Psoas muscle (tissue), 8 donors: ENCODE measurements at regions of chr9 and their contacts with region 1.

Region 1: GRCh38 chr9:137759649-137760321 is 117.8 kb upstream of the CACNA1B start:
- DNase-seq: no peak
- ATAC-seq: peak in 3 of 4 donors; percentile 9 to 14 (median 11)
- H3K4me3 ChIP-seq: no peak overlapping the region
- H3K27ac ChIP-seq: peak overlapping the region; percentile 77
- H3K4me1 ChIP-seq: peaks cover 6% of the 10 kb centered on the region
- H3K27me3 ChIP-seq: no peaks in the 10 kb centered on the region
- CTCF ChIP-seq: no peak

Region 2: DNA sequence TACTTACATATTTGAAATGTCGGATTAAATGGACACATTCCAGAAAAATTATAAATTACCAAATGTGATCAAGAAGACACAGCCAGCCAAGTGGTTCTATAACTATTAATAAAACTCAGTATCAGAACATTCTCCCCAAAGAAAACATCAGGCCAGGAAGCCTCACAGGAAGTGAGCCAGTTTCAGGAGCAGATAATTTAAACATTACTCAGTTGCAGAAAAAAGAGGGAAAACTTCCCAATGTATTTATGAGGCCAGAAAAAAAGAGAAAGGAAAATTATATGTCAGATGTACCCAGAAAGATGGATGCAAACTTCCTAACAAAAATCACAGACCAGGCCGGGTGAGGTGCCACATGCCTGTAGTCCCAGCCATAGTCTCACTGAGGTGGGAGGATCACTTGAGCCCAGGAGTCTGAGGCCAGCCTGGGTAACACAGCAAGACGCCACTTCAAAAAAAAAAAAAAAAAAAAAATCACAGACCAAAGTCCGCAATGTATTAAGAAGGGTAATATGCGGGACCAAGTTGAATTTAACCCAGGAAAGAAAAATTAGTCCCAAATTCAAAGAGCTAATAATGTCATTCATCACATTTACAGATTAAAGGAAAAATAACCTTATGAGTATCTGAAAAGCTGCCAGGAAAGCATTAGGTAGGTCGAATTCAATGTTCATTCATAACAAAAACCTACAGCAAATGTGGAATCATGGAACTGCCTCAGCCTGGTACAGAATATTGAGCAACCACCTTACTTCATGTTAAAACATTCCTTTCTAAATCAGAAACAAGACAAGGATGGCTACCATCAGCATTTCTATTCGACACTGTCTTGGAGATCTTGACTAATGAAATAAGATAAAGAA is 420.5 kb before region 1 on chr9:
- intact Hi-C with region 1: no loop called
- DNase-seq: no peak
- ATAC-seq: no peak
- H3K4me3 ChIP-seq: no peak overlapping the region
- H3K27ac ChIP-seq: no peak overlapping the region
- H3K4me1 ChIP-seq: no peaks in the 10 kb centered on the region
- H3K27me3 ChIP-seq: no peaks in the 10 kb centered on the region
- CTCF ChIP-seq: no peak

Region 3: DNA sequence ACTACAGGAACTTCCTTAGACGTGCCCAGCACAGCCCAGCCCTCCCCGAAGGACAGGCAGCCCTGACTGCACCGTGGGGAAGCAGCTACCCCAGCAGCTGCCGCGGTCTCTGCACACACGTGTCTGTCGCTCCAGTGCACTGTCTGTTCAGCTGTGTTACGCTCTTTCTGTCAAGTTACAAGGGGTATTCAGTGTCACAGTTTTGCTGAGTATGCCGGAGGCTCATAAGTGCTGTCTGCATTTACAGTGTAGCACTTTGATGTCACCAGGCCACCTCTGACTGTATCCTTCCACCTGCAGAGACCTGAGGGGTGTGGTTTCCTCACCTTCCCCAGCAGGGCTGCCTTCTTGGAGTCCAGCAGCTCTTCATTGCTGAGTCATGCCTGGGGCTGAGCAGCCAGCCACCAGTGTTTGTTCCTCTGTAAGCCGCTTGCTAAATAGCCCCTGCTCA is 14.2 kb before region 1 on chr9:
- intact Hi-C with region 1: loop called in 1 of 2 experiments (anchors 1 kb)
- DNase-seq: peak in 1 of 2 donors; percentile 59
- ATAC-seq: peak; percentile 86 to 93 (median 86)
- H3K4me3 ChIP-seq: peak overlapping the region; percentile 2
- H3K27ac ChIP-seq: peak overlapping the region; percentile 65
- H3K4me1 ChIP-seq: peaks cover 11% of the 10 kb centered on the region
- H3K27me3 ChIP-seq: no peaks in the 10 kb centered on the region
- CTCF ChIP-seq: no peak

Region 4: DNA sequence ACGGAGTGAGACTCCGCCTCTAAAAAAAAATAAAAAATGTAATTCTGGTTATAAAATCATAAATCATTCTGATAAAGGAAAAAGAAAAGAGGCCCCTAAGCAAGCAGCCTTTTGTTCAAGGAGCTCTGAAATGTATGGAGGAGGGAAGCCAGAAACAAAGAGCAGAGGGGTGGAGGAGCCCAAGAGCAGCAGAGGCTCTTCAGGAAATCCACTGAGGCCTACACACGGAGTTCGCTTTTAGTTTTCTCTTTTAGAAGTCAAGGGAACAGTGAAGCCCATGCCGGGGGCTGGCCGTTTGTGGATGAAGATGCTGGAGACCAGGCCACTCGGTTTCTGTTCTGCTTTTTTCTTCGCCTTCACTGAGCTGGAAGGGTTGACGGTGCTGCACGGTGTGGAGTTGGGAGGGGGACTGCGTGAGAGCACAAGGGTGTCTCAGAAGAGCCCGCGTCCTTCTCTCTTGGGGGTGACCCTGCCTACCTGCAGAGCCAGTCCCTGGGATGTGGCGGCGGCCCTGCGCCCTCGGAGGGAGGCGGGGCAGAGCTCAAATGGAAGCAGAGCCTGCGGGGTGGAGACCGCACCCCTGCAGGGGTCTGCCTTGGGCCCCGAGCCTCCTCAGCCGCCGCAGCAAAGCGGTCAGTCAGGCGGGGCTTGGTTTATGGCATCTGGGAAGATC is 49.3 kb after region 1 on chr9:
- intact Hi-C with region 1: no loop called
- DNase-seq: no peak
- ATAC-seq: no peak
- H3K4me3 ChIP-seq: no peak overlapping the region
- H3K27ac ChIP-seq: no peak overlapping the region
- H3K4me1 ChIP-seq: no peaks in the 10 kb centered on the region
- H3K27me3 ChIP-seq: no peaks in the 10 kb centered on the region
- CTCF ChIP-seq: no peak

Region 5: DNA sequence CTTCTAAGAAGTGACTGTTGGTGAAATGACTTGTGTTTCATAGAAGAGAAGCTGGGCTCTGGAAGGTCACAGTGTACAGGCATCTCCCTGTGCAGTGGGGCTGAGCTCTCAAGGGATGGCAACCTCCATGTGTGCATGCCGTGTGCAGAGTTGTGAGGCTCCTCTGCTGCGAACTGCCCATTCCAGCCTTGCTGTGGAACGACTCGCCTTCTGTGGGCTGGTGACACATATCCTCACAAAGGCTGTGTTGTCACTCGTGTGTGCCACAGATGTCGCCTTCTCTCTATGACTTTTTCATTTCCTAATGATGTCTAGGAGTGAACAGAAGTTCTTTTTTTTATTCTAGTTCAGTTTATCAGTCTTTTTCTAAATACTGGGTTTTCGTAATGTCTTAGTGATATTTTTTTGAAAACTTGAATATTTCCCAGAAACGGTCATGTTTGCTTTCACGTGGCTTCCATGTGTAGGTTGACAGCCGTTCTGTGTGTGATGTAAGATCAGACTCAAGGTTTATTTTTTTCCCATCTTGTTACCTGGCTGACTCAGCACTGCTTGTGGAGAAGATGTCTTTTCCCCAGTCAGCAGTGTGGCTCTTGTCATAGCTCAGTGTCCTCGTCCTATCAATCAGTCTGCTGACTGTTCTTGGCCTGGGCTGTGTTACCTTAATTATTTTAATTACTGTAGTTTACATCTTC is 60.5 kb after region 1 on chr9:
- intact Hi-C with region 1: no loop called
- DNase-seq: no peak
- ATAC-seq: no peak
- H3K4me3 ChIP-seq: no peak overlapping the region
- H3K27ac ChIP-seq: no peak overlapping the region
- H3K4me1 ChIP-seq: no peaks in the 10 kb centered on the region
- H3K27me3 ChIP-seq: no peaks in the 10 kb centered on the region
- CTCF ChIP-seq: no peak

Region 6: GRCh38 chr9:138022121-138022741 is 262.4 kb after region 1 on chr9:
- intact Hi-C with region 1: no loop called
- DNase-seq: peak in 1 of 2 donors; percentile 27
- ATAC-seq: no peak
- H3K4me3 ChIP-seq: no peak overlapping the region
- H3K27ac ChIP-seq: no peak overlapping the region
- H3K4me1 ChIP-seq: no peaks in the 10 kb centered on the region
- H3K27me3 ChIP-seq: peaks cover 0 to 59% (median 17%) of the 10 kb centered on the region in 3 donors
- CTCF ChIP-seq: no peak